Adrenal gland (tissue), 19 donors: ENCODE measurements at regions of chr9 and their contacts with region 1.

Region 1: GRCh38 chr9:35096035-35096849 is at the start of gene PIGO:
- DNase-seq: peak; percentile 87 to 94 (median 92)
- H3K4me3 ChIP-seq: peak within 1 kb of the TSS; percentile 47 to 97 (median 91)
- H3K27ac ChIP-seq: peak within 1 kb of the TSS; percentile 92 to 99 (median 97)
- H3K4me1 ChIP-seq: peaks cover 7 to 10% of the 10 kb centered on the region in 2 donors
- H3K27me3 ChIP-seq: no peaks in the 10 kb centered on the region
- CTCF ChIP-seq: peak; percentile 47 to 91 (median 82)
- POLR2A ChIP-seq: peak; percentile 67 to 71
- total RNA-seq, gene PIGO: 19.7 to 37.4 (median 32.1) TPM

Region 2: DNA sequence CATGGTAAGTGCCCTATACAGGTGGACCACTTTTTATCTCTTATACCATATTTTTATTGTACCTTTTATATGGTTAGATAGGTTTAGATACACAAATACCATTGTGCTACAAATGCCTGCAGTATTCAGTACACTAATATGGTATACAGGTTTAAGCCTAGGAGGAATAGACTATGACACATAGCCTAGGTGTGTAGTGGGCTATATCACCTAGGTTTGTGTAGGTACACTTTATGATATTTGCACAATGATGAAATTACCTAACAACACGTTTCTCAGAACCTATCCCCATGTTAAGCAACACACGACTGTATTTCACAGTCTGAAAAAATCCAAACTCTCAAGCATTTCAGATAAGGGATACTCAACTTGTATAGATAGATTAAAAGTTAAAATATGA is 147.8 kb before region 1 on chr9:
- intact Hi-C with region 1: no loop called
- DNase-seq: no peak
- H3K4me3 ChIP-seq: no peak overlapping the region
- H3K27ac ChIP-seq: no peak overlapping the region
- H3K4me1 ChIP-seq: no peaks in the 10 kb centered on the region
- H3K27me3 ChIP-seq: no peaks in the 10 kb centered on the region
- CTCF ChIP-seq: no peak
- POLR2A ChIP-seq: no peak

Region 3: GRCh38 chr9:34989003-34989945 is 107.0 kb before region 1 on chr9 and contains the start of gene DNAJB5:
- intact Hi-C with region 1: loop called in 1 of 2 experiments (anchors 10 kb)
- DNase-seq: peak; percentile 99 to 100 (median 100)
- H3K4me3 ChIP-seq: peak within 1 kb of the TSS in 3 of 4 donors; percentile 63 to 88 (median 71)
- H3K27ac ChIP-seq: peak within 1 kb of the TSS in 4 of 5 donors; percentile 86 to 95 (median 91)
- H3K4me1 ChIP-seq: peaks cover 29 to 40% of the 10 kb centered on the region in 2 donors
- H3K27me3 ChIP-seq: no peaks in the 10 kb centered on the region
- CTCF ChIP-seq: peak in 1 of 6 experiments; percentile 4
- POLR2A ChIP-seq: peak; percentile 93 to 95
- total RNA-seq, gene DNAJB5: 6.2 to 22.4 (median 13.3) TPM

Region 4: GRCh38 chr9:35026671-35027070 is 69.6 kb before region 1 on chr9:
- intact Hi-C with region 1: no loop called
- DNase-seq: peak in 2 of 7 donors; percentile 30 to 43
- H3K4me3 ChIP-seq: no peak overlapping the region
- H3K27ac ChIP-seq: peak overlapping the region; percentile 74 to 88 (median 82)
- H3K4me1 ChIP-seq: peaks cover 12 to 18% of the 10 kb centered on the region in 2 donors
- H3K27me3 ChIP-seq: no peaks in the 10 kb centered on the region
- CTCF ChIP-seq: no peak
- POLR2A ChIP-seq: peak in 1 of 2 donors; percentile 4